Common myeloid progenitor, CD34-positive (primary cell): ENCODE measurements at regions of chr15 and their contacts with region 1.

Region 1: GRCh38 chr15:94324117-94324826 is 92.9 kb downstream of the MCTP2 start:
- DNase-seq: peak; percentile 83 to 91 (median 87)
- H3K4me3 ChIP-seq: no peak overlapping the region
- H3K27ac ChIP-seq: no peak overlapping the region
- H3K4me1 ChIP-seq: peaks cover 6 to 32% (median 29%) of the 10 kb centered on the region in 4 experiments
- H3K27me3 ChIP-seq: no peaks in the 10 kb centered on the region

Region 2: DNA sequence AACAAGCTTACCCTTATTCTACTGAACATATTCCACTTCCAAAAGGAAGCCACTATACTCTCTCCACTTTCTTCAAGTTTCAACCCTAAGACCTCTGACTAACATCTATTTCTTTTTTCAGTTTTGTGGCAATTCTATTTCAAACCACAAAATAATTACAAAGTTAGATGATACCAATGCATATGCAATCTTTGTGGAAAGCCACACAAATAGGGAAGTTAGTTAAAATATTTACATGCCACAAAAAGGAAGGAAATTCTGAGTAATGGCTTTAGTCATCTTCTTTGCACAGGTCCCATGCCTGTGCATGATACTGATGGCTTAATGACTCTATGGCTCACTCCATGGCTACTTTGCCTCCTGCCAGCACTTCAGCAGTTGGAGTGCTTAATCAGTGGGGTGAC is 149.9 kb before region 1 on chr15:
- CTCF ChIA-PET with region 1: interaction called, 19 read pairs
- POLR2A ChIA-PET with region 1: no interaction called
- DNase-seq: peak; percentile 91 to 98 (median 96)
- H3K4me3 ChIP-seq: peak overlapping the region in 1 of 7 experiments; percentile 20
- H3K27ac ChIP-seq: no peak overlapping the region
- H3K4me1 ChIP-seq: peaks cover 7 to 25% (median 19%) of the 10 kb centered on the region in 4 experiments
- H3K27me3 ChIP-seq: no peaks in the 10 kb centered on the region

Region 3: GRCh38 chr15:94238539-94239118 is 85.6 kb before region 1 on chr15:
- CTCF ChIA-PET with region 1: interaction called, 22 read pairs
- POLR2A ChIA-PET with region 1: no interaction called
- DNase-seq: peak in 2 of 3 donors; percentile 52 to 72
- H3K4me3 ChIP-seq: no peak overlapping the region
- H3K27ac ChIP-seq: peak overlapping the region in 1 of 2 experiments; percentile 55
- H3K4me1 ChIP-seq: peaks cover 29 to 83% (median 65%) of the 10 kb centered on the region in 4 experiments
- H3K27me3 ChIP-seq: no peaks in the 10 kb centered on the region

Region 4: DNA sequence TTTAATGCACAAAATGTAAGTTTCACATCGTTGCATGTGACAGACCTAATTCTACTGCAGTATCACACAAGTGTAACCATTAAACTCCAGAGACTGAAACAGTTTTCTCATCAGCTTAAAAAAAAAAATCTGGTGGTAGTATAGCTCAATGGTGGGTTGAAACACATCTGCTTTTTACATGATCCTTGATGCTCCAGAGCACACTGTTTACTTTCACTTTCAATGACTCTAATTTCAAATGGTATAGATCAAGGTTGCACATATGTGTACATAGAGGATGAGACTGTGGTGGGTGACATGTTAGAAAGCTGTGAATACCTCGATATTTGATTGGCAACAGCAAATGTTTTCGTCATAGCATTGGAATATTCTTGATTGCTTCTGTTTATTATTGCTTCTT is 70.5 kb before region 1 on chr15:
- CTCF ChIA-PET with region 1: interaction called, 19 read pairs
- POLR2A ChIA-PET with region 1: no interaction called
- DNase-seq: peak in 2 of 3 donors; percentile 46 to 61
- H3K4me3 ChIP-seq: no peak overlapping the region
- H3K27ac ChIP-seq: no peak overlapping the region
- H3K4me1 ChIP-seq: peaks cover 28 to 52% (median 38%) of the 10 kb centered on the region in 4 experiments
- H3K27me3 ChIP-seq: no peaks in the 10 kb centered on the region

Region 5: GRCh38 chr15:94297558-94297957 is 26.7 kb before region 1 on chr15:
- CTCF ChIA-PET with region 1: interaction called, 10 read pairs
- POLR2A ChIA-PET with region 1: no interaction called
- DNase-seq: peak in 2 of 3 donors; percentile 70 to 82
- H3K4me3 ChIP-seq: peak overlapping the region in 4 of 7 experiments; percentile 12 to 60 (median 38)
- H3K27ac ChIP-seq: peak overlapping the region; percentile 12 to 73
- H3K4me1 ChIP-seq: peaks cover 37 to 83% (median 63%) of the 10 kb centered on the region in 4 experiments
- H3K27me3 ChIP-seq: no peaks in the 10 kb centered on the region

Region 6: DNA sequence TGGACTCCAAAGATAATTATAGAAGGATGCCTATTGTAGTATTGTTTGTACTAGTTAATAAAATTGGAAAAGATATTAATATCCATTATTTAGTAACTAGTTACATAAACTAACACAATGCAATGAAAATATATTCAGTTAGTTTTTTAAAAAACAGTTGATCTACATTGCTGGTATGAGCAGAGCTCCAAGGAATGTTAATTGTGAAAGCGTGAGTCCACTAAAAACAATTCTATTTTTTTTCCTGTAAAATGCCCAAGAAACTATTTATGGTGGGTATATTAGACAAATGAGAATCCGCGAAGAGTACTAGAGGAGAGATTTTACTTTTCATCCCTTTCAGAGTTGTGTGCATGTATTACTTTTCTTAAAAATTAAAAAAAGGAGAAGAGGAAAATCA is 11.3 kb after region 1 on chr15:
- CTCF ChIA-PET with region 1: interaction called, 36 read pairs
- POLR2A ChIA-PET with region 1: no interaction called
- DNase-seq: no peak
- H3K4me3 ChIP-seq: no peak overlapping the region
- H3K27ac ChIP-seq: no peak overlapping the region
- H3K4me1 ChIP-seq: peaks cover 0 to 8% (median 3%) of the 10 kb centered on the region in 4 experiments
- H3K27me3 ChIP-seq: no peaks in the 10 kb centered on the region

Region 7: DNA sequence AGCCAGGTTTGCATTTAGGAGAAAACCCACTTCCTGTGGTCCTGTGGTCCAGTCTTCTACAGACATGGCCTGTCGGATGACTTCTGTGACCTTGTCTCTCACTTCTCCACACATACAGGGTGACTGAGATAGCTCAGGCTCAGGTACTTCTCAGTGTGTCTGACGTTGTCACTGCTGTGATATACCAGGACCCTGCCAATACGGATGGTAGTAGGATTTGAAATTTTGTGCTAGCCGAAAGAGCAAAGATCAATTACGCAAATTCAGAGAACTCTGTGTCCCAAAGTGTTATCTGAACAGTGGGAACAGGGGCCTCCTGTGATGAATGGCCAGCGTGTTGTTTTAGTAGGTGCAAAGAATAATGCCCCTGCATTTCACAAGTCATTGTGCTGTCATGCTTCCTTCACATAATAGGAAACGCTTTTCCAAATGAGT is 36.0 kb after region 1 on chr15:
- CTCF ChIA-PET with region 1: no interaction called
- POLR2A ChIA-PET with region 1: no interaction called
- DNase-seq: no peak
- H3K4me3 ChIP-seq: no peak overlapping the region
- H3K27ac ChIP-seq: no peak overlapping the region
- H3K4me1 ChIP-seq: no peaks in the 10 kb centered on the region
- H3K27me3 ChIP-seq: no peaks in the 10 kb centered on the region

Region 8: GRCh38 chr15:94535298-94536048 is 211.2 kb after region 1 on chr15:
- CTCF ChIA-PET with region 1: no interaction called
- POLR2A ChIA-PET with region 1: no interaction called
- DNase-seq: no peak
- H3K4me3 ChIP-seq: no peak overlapping the region
- H3K27ac ChIP-seq: no peak overlapping the region
- H3K4me1 ChIP-seq: no peaks in the 10 kb centered on the region
- H3K27me3 ChIP-seq: peaks cover 0 to 10% (median 6%) of the 10 kb centered on the region in 5 experiments